B cell (primary cell): ENCODE measurements at regions of chr6 and their contacts with region 1.

Region 1: GRCh38 chr6:89242574-89243330 is 25.6 kb upstream of the GABRR1 start:
- DNase-seq: peak; percentile 28
- ATAC-seq: no peak
- H3K4me3 ChIP-seq: no peak overlapping the region
- H3K4me3 Mint-ChIP-seq: no peak overlapping the region
- H3K27ac ChIP-seq: no peak overlapping the region
- H3K27ac Mint-ChIP-seq: no peak overlapping the region
- H3K4me1 ChIP-seq: peaks cover 13 to 15% of the 10 kb centered on the region in 2 donors
- H3K4me1 Mint-ChIP-seq: peaks cover 15% of the 10 kb centered on the region
- H3K27me3 ChIP-seq: peaks cover 0 to 19% (median 2%) of the 10 kb centered on the region in 4 experiments
- H3K27me3 Mint-ChIP-seq: peaks cover 34% of the 10 kb centered on the region
- CTCF ChIP-seq: peak; percentile 23

Region 2: GRCh38 chr6:89122625-89123024 is 120.1 kb before region 1 on chr6:
- CTCF ChIA-PET with region 1: interaction called, 9 read pairs
- POLR2A ChIA-PET with region 1: no interaction called
- intact Hi-C with region 1: loop called (anchors 2 kb)
- DNase-seq: peak; percentile 33
- ATAC-seq: no peak
- H3K4me3 ChIP-seq: no peak overlapping the region
- H3K4me3 Mint-ChIP-seq: no peak overlapping the region
- H3K27ac ChIP-seq: no peak overlapping the region
- H3K27ac Mint-ChIP-seq: no peak overlapping the region
- H3K4me1 ChIP-seq: peaks cover 0 to 4% of the 10 kb centered on the region in 2 donors
- H3K4me1 Mint-ChIP-seq: peaks cover 2% of the 10 kb centered on the region
- H3K27me3 ChIP-seq: peaks cover 0 to 4% (median 0%) of the 10 kb centered on the region in 4 experiments
- H3K27me3 Mint-ChIP-seq: peaks cover 6% of the 10 kb centered on the region
- CTCF ChIP-seq: peak; percentile 55